ENCODE measurements at regions of chr12 and their contacts with region 1.

Region 1: DNA sequence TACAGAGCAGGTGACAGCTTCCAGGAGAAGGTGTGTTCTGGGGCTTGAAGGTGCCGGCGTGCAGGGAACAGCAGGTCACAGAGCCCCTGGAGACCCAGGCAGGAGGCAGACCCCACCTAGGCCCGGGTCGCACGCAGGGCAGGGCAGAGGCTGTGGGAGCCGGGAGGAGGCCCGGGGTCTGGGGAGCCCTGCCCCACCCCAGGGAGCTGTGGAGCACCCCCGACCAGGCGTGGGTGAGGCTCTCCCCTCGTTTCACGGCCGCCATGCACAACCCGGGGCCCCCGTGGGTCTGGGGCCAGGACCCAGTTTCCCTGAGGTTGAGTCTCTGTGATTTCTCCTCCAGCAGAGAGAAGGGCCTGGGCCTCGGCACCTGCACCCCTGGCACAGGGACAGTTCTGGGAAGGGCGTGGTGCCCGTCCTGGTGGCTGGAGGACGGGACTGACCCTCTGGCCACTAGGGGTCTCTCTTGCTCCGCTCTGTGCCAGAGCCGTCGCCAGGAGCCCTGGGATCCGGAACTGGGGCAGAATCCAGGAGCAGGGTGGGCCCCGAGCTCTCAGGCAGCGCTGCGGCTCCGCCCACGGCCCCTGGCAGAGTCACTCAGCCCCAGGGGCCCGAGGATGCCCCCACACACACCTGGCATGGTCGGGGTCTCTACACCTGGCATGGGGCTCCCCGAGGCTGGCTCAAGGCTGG is 75.2 kb upstream of the FBRSL1 start:
- ATAC-seq: peak; percentile 86 to 99 (median 92)
- H3K4me3 ChIP-seq: peak overlapping the region in 2 of 5 donors; percentile 5 to 12
- H3K27ac ChIP-seq: no peak overlapping the region
- H3K4me1 ChIP-seq: peaks cover 0 to 24% of the 10 kb centered on the region in 2 donors

Region 2: DNA sequence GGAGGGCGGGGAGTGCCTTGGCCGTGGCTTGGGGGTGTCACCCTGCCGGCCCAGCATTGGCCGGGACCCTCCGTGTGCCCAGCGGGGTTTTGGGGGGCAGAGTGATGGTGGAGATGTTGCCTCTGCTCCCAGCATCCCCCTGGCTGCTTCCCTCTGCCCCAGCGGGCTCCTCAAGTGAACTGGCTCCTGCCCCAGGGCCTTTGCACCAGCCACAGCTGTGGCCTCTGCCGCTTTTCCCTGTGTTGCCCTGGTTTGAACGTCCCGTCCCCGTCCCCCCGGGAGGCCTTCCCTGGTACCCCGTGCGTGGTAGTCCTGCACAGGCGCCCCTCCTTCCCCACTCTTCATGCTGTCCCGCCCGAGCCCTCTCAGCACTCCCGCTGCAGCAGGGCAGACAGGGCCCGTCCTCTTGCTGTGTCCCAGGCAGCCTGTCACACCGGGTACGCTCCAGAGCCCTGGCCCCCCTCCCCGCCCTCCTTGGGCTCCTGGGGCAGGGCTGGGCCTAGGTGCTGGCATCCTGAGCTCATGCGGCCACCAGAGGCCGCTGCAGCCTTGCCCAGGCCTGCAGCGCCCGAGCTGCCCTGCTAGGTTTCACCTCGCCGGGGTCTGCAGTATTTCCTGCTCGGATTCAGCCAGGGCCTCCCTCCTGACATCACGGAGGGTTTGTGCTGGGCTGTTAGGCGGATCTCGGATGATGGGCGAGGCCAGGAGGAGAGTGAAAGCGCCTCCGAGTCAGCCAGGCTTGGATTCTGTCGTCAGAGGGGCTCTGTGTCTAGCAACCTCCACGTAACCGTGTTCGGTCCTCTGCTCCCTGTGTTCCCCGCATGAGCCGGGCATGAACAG is 261.1 kb before region 1 on chr12:
- in situ Hi-C with region 1: loop called in 1 of 9 experiments (anchors 25 kb)
- ATAC-seq: peak; percentile 91 to 99 (median 96)
- H3K4me3 ChIP-seq: no peak overlapping the region
- H3K27ac ChIP-seq: no peak overlapping the region
- H3K4me1 ChIP-seq: peaks cover 0 to 3% of the 10 kb centered on the region in 2 donors

Region 3: GRCh38 chr12:132560614-132561426 is 146.0 kb after region 1 on chr12:
- in situ Hi-C with region 1: loop called in 3 of 9 experiments (anchors 25 kb)
- ATAC-seq: peak; percentile 28 to 68 (median 62)
- H3K4me3 ChIP-seq: peak overlapping the region; percentile 49 to 90 (median 75)
- H3K27ac ChIP-seq: peak overlapping the region in 1 of 2 donors; percentile 64
- H3K4me1 ChIP-seq: peaks cover 21 to 23% of the 10 kb centered on the region in 2 donors

Region 4: DNA sequence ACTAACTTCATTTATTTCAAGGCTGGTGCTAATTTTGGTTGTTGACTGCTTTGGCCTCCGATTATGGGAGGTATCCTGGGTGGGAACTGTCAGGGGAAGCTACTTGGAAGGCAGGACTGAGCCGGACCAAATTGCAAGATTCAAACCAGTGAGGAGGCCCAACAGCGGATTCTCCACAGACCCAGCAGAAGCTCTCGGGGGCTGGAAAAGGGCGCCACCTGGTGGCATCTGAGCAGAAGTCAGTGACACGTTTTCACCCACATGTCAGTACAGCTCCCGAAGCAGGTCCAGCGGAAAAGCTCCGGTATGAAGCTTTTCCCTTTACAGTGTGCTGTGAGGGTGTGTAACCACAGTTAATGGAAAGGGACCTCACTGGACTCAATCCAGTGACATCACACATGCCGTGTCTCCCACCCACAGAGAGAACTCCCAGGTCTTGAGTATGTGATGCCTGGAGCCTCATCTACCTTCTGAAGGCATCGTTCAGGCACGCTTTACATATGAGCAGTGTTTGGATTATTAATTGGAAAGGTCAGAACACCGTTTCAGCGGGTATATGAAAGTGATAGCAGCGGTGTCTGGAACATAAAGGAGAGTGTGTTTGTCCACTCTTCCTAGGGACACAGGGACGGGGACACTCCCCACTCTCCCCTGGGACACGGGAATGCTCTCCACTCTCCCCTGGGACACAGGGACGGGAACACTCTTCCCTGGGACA is 200.2 kb after region 1 on chr12:
- in situ Hi-C with region 1: loop called in 3 of 9 experiments (anchors 25 kb)
- ATAC-seq: peak; percentile 82 to 95 (median 86)
- H3K4me3 ChIP-seq: no peak overlapping the region
- H3K27ac ChIP-seq: no peak overlapping the region
- H3K4me1 ChIP-seq: peaks cover 0 to 3% of the 10 kb centered on the region in 2 donors